ENCODE measurements at regions of chr5 and their contacts with region 1.

Region 1: GRCh38 chr5:134370871-134371833 is at the start of gene UBE2B:
- DNase-seq: peak; percentile 99 to 100 (median 99)
- H3K4me3 ChIP-seq: peak within 1 kb of the TSS; percentile 80 to 100 (median 95)
- H3K4me3 Mint-ChIP-seq: peak within 1 kb of the TSS; percentile 95 to 98
- H3K27ac ChIP-seq: peak within 1 kb of the TSS; percentile 98 to 99
- H3K27ac Mint-ChIP-seq: peak within 1 kb of the TSS; percentile 98 to 100 (median 99)
- H3K4me1 ChIP-seq: peaks cover 28 to 30% of the 10 kb centered on the region in 2 donors
- H3K4me1 Mint-ChIP-seq: peaks cover 41% of the 10 kb centered on the region
- H3K27me3 ChIP-seq: no peaks in the 10 kb centered on the region
- H3K27me3 Mint-ChIP-seq: peaks cover 0 to 5% (median 3%) of the 10 kb centered on the region in 3 donors
- CTCF ChIP-seq: no peak
- polyA plus RNA-seq, gene UBE2B: 30.6 to 68.6 (median 43.4) TPM

Region 2: DNA sequence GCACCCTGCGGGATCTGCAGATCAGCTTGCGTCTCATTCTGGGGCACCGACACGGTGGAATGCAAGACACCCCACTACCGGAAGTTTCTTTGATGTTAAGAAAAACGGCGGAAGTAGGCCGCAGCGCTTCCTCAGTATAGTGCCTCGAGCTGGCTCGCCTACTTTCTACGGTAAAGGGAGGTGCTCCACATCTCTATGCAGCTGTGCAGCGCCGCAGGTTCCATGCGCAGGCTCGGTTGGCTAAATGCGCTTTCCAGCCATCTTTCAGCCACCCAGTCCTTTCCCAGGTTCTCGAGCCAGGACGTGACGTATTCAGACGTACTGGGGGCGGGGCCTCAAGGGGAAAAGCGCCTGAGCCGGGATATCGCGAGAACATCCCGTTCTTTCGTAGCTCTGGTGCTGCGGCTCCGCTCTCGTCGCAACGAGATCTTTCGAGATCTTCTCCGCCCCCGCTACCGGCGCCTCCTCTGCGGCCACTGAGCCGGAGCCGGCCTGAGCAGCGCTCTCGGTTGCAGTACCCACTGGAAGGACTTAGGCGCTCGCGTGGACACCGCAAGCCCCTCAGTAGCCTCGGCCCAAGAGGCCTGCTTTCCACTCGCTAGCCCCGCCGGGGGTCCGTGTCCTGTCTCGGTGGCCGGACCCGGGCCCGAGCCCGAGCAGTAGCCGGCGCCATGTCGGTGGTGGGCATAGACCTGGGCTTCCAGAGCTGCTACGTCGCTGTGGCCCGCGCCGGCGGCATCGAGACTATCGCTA is 1319.4 kb before region 1 on chr5 and contains the start of gene HSPA4:
- intact Hi-C with region 1: loop called in 1 of 2 experiments (anchors 10 kb)
- DNase-seq: peak; percentile 98 to 99 (median 98)
- H3K4me3 ChIP-seq: peak within 1 kb of the TSS; percentile 71 to 92 (median 91)
- H3K4me3 Mint-ChIP-seq: peak within 1 kb of the TSS; percentile 91 to 95
- H3K27ac ChIP-seq: peak within 1 kb of the TSS; percentile 98 to 99
- H3K27ac Mint-ChIP-seq: peak within 1 kb of the TSS; percentile 98 to 100 (median 99)
- H3K4me1 ChIP-seq: peaks cover 19 to 25% of the 10 kb centered on the region in 2 donors
- H3K4me1 Mint-ChIP-seq: peaks cover 29% of the 10 kb centered on the region
- H3K27me3 ChIP-seq: no peaks in the 10 kb centered on the region
- H3K27me3 Mint-ChIP-seq: peaks cover 0 to 1% (median 0%) of the 10 kb centered on the region in 3 donors
- CTCF ChIP-seq: no peak
- polyA plus RNA-seq, gene HSPA4: 15.7 to 52.0 (median 27.7) TPM

Region 3: GRCh38 chr5:134184155-134185135 is 186.7 kb before region 1 on chr5:
- intact Hi-C with region 1: loop called (anchors 10 kb)
- DNase-seq: peak; percentile 66 to 78 (median 74)
- H3K4me3 ChIP-seq: no peak overlapping the region
- H3K4me3 Mint-ChIP-seq: no peak overlapping the region
- H3K27ac ChIP-seq: no peak overlapping the region
- H3K27ac Mint-ChIP-seq: peak overlapping the region in 1 of 7 donors; percentile 34
- H3K4me1 ChIP-seq: no peaks in the 10 kb centered on the region
- H3K4me1 Mint-ChIP-seq: peaks cover 8% of the 10 kb centered on the region
- H3K27me3 ChIP-seq: no peaks in the 10 kb centered on the region
- H3K27me3 Mint-ChIP-seq: peaks cover 0 to 10% (median 5%) of the 10 kb centered on the region in 3 donors
- CTCF ChIP-seq: peak; percentile 96

Region 4: GRCh38 chr5:134225618-134226440 is 145.3 kb before region 1 on chr5 and contains the start of gene PPP2CA:
- intact Hi-C with region 1: loop called (anchors 2 to 5 kb)
- DNase-seq: peak; percentile 97 to 99 (median 99)
- H3K4me3 ChIP-seq: peak within 1 kb of the TSS; percentile 84 to 96 (median 88)
- H3K4me3 Mint-ChIP-seq: peak within 1 kb of the TSS; percentile 94 to 97
- H3K27ac ChIP-seq: peak within 1 kb of the TSS; percentile 97 to 99
- H3K27ac Mint-ChIP-seq: peak within 1 kb of the TSS; percentile 97 to 99 (median 99)
- H3K4me1 ChIP-seq: peaks cover 32 to 47% of the 10 kb centered on the region in 2 donors
- H3K4me1 Mint-ChIP-seq: peaks cover 33% of the 10 kb centered on the region
- H3K27me3 ChIP-seq: no peaks in the 10 kb centered on the region
- H3K27me3 Mint-ChIP-seq: no peaks in the 10 kb centered on the region
- CTCF ChIP-seq: peak; percentile 18
- polyA plus RNA-seq, gene PPP2CA: 82.5 to 245 (median 225) TPM

Region 5: DNA sequence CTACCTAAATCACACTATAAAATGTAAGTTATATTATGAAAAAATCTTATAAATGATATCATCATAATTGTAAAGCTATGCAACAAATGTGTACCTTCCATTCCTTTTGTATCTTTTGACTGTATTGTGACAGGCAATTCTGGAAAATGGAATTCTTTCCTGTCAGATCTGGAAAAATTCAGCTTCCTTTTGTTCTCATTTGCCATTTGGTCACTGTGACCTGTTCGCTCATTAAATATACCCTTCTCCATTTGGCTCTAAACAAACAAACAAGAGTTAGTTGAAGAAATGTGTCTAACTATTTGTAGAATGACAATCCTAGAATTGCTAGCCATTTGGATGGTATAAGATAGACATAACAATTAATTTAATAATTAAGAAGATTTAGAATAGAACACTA is 66.8 kb before region 1 on chr5:
- intact Hi-C with region 1: loop called in 1 of 2 experiments (anchors 10 kb)
- DNase-seq: no peak
- H3K4me3 ChIP-seq: no peak overlapping the region
- H3K4me3 Mint-ChIP-seq: no peak overlapping the region
- H3K27ac ChIP-seq: no peak overlapping the region
- H3K27ac Mint-ChIP-seq: no peak overlapping the region
- H3K4me1 ChIP-seq: no peaks in the 10 kb centered on the region
- H3K4me1 Mint-ChIP-seq: no peaks in the 10 kb centered on the region
- H3K27me3 ChIP-seq: no peaks in the 10 kb centered on the region
- H3K27me3 Mint-ChIP-seq: peaks cover 0 to 3% (median 2%) of the 10 kb centered on the region in 3 donors
- CTCF ChIP-seq: no peak

Region 6: GRCh38 chr5:134877159-134877558 is 506.0 kb after region 1 on chr5:
- intact Hi-C with region 1: no loop called
- DNase-seq: no peak
- H3K4me3 ChIP-seq: no peak overlapping the region
- H3K4me3 Mint-ChIP-seq: no peak overlapping the region
- H3K27ac ChIP-seq: no peak overlapping the region
- H3K27ac Mint-ChIP-seq: peak overlapping the region in 4 of 7 donors; percentile 4 to 35 (median 8)
- H3K4me1 ChIP-seq: peaks cover 13 to 20% of the 10 kb centered on the region in 2 donors
- H3K4me1 Mint-ChIP-seq: peaks cover 25% of the 10 kb centered on the region
- H3K27me3 ChIP-seq: no peaks in the 10 kb centered on the region
- H3K27me3 Mint-ChIP-seq: peaks cover 0 to 2% (median 0%) of the 10 kb centered on the region in 3 donors
- CTCF ChIP-seq: no peak